Esophagus muscularis mucosa (tissue), 4 donors: ENCODE measurements at regions of chr19 and their contacts with region 1.

Region 1: GRCh38 chr19:51651216-51651846 is 4.7 kb upstream of the SIGLEC14 start:
- DNase-seq: no peak
- H3K4me3 ChIP-seq: no peak overlapping the region
- H3K27ac ChIP-seq: no peak overlapping the region
- H3K4me1 ChIP-seq: no peaks in the 10 kb centered on the region
- H3K27me3 ChIP-seq: peaks cover 0 to 30% (median 0%) of the 10 kb centered on the region in 4 donors
- CTCF ChIP-seq: no peak
- EP300 ChIP-seq: no peak
- POLR2A ChIP-seq: no peak

Region 2: GRCh38 chr19:51282335-51282734 is 369.0 kb before region 1 on chr19:
- intact Hi-C with region 1: no loop called
- DNase-seq: no peak
- H3K4me3 ChIP-seq: no peak overlapping the region
- H3K27ac ChIP-seq: no peak overlapping the region
- H3K4me1 ChIP-seq: no peaks in the 10 kb centered on the region
- H3K27me3 ChIP-seq: peaks cover 0 to 37% (median 0%) of the 10 kb centered on the region in 4 donors
- CTCF ChIP-seq: no peak
- EP300 ChIP-seq: no peak
- POLR2A ChIP-seq: no peak

Region 3: DNA sequence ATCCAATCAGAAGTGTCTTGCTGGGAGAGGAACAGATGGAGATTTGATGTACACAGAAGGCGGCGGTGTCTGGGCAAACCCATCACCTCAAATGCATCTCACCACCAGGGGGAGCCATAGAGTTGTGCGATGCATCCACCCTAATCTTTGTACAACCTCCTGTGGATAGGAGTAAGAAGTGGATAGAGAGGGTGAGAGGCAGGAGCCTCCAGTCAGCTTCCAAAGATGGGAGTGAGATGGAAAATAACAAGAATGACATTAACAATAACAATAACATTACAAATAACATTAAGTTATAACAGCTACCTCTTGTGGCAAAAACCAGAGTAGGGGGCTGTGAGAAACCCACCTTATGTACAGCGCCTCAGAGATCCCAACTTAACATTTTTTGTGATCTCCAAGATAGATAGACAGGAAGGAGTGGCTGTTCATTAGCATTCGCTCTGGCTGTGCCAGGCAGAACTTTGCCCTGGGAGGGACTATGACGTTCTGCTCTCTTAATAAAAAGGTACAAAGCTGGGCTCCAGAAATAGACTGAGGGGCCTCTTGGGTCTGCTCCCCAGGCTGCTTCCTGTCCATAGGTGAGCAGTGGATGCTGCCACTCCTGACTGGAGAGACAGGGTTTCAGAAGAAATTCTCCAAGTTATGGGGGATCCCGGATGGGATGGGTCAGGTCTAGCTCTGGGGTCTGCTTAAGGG is 178.2 kb before region 1 on chr19:
- intact Hi-C with region 1: loop called (anchors 10 kb)
- DNase-seq: peak; percentile 95
- H3K4me3 ChIP-seq: no peak overlapping the region
- H3K27ac ChIP-seq: no peak overlapping the region
- H3K4me1 ChIP-seq: no peaks in the 10 kb centered on the region
- H3K27me3 ChIP-seq: peaks cover 0 to 52% (median 0%) of the 10 kb centered on the region in 4 donors
- CTCF ChIP-seq: peak; percentile 73 to 84 (median 82)
- EP300 ChIP-seq: no peak
- POLR2A ChIP-seq: no peak

Region 4: GRCh38 chr19:51607920-51608562 is 43.3 kb before region 1 on chr19:
- intact Hi-C with region 1: loop called (anchors 10 kb)
- DNase-seq: peak; percentile 93
- H3K4me3 ChIP-seq: no peak overlapping the region
- H3K27ac ChIP-seq: no peak overlapping the region
- H3K4me1 ChIP-seq: no peaks in the 10 kb centered on the region
- H3K27me3 ChIP-seq: peaks cover 0 to 24% (median 0%) of the 10 kb centered on the region in 4 donors
- CTCF ChIP-seq: peak; percentile 17 to 34 (median 34)
- EP300 ChIP-seq: no peak
- POLR2A ChIP-seq: no peak

Region 5: GRCh38 chr19:51777570-51778462 is 126.5 kb after region 1 on chr19:
- intact Hi-C with region 1: loop called (anchors 10 kb)
- DNase-seq: peak; percentile 62
- H3K4me3 ChIP-seq: no peak overlapping the region
- H3K27ac ChIP-seq: no peak overlapping the region
- H3K4me1 ChIP-seq: peaks cover 3 to 7% (median 7%) of the 10 kb centered on the region in 4 donors
- H3K27me3 ChIP-seq: peaks cover 0 to 50% (median 7%) of the 10 kb centered on the region in 4 donors
- CTCF ChIP-seq: peak; percentile 59 to 80 (median 61)
- EP300 ChIP-seq: no peak
- POLR2A ChIP-seq: no peak